IMR-90 (cell line): ENCODE measurements at regions of chr1 and their contacts with region 1.

Region 1: DNA sequence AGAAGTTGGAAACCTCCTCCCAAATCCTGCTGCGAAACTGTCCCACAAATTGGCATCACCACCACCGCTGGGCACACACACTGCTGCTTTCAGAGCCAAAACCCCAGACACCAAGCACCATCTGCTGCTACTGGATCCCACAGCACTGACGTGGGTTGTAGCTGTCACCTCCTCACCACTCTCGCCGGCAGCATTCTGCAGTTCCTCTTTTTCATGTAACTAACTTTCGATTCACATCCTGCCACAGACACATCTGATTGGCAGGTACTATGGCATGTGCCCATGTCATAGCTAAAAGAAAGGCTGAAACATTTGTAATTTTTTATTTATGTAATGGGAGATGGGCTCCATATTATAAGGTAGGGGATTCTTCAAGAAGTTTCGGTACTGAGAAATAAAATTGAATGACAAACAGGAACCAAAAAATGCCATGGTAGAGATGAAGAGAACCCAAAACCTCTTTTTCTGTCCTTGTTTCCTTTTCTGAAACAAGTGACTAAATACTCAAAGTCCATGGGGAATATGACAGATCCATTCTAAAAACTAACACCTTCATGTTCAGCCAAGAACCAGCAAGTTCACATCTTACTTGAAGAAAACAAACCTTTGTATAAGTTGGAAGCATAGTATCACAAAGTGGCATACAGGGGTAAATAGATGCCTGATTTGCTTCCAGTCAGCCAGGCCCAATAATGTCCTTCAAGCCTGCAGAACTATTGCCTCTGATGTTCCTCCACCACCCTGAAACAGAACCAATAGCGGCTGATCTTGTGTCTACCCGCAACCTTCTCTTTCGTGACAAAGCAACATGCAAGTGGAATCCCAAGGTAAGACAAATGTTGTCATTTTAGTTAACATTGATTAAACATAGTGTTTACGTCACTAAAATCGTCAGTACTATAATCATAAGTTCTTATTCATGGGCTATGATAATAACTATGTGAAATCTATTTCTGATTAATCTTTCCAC is 26.6 kb upstream of the RGS13 start:
- DNase-seq: no peak
- ATAC-seq: no peak
- H3K4me3 ChIP-seq: no peak overlapping the region
- H3K27ac ChIP-seq: no peak overlapping the region
- H3K4me1 ChIP-seq: no peaks in the 10 kb centered on the region; the same call in 1 of the 2 replicates
- H3K27me3 ChIP-seq: no peaks in the 10 kb centered on the region
- CTCF ChIP-seq: no peak
- POLR2A ChIP-seq: no peak
- RAD21 ChIP-seq: no peak

Region 2: DNA sequence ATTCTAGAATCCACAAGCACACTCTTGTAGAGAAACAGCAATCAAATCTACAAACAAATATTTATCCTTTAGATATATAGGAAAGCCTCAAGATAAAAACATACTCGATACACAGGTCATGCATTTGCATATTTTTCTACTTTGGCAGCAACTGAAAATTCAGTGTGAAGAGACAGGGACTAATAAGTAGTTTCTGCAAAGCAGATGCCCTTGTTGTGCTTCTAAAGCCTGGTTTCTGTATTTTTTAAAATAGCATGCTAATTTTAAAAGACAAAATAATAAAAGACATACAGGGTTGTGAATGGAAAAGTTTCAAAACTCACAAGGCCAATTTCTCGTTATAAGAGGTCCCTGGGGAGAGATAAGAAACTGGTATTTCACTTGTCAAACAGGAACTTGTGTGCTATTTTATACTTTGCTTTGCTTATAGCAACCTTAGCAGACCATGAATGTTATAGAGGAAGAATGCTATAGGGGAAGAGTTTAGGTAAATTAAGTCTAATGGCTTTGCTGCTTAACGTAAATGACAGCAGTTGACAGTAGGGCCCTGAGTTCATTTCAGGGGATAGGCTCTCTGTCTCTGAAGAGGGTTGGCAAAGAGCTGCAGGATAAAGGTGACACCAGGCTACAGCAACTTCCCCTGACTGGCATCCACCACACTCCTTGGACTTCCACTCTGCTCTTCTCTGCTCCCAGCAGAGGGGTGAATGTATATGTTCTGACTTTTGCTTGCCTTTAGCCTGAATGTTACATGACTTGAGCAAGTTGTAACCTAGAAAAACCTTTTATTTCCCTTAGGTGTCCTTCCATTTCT is 17.2 kb after region 1 on chr1:
- CTCF ChIA-PET with region 1: no interaction called
- POLR2A ChIA-PET with region 1: no interaction called
- dilution Hi-C with region 1: no loop called
- in situ Hi-C with region 1: no loop called
- intact Hi-C with region 1: no loop called
- DNase-seq: no peak
- ATAC-seq: no peak
- H3K4me3 ChIP-seq: no peak overlapping the region
- H3K27ac ChIP-seq: no peak overlapping the region
- H3K4me1 ChIP-seq: no peaks in the 10 kb centered on the region; the same call in 1 of the 2 replicates
- H3K27me3 ChIP-seq: no peaks in the 10 kb centered on the region
- CTCF ChIP-seq: no peak
- POLR2A ChIP-seq: no peak
- RAD21 ChIP-seq: no peak

Region 3: DNA sequence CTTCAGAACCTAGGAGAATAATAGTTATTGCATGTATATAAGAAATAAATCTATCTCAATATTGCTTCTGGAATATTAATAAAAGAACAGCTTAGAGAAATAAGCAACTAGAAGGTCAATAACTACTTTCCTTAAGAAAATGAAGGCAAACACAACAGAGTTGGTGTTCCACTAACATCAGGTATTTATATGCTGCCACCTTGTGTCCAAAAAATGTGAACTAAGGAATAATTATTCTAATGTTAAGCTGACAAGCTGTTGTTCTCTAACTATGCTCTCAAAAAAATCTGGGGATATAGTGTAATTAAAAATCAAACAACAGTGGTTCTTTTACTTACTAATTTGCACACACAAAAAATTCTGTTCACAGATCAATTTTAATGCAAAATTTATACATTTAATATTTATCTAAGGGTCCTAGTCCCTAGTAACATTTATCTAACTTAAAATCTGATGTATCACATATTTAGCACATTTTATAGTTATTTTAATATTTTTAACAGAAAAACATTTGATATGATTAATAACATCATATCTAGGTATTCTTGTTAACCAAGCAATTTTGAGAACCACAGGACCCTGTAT is 410.1 kb after region 1 on chr1:
- CTCF ChIA-PET with region 1: no interaction called
- POLR2A ChIA-PET with region 1: no interaction called
- dilution Hi-C with region 1: no loop called
- in situ Hi-C with region 1: no loop called
- intact Hi-C with region 1: loop called (anchors 1 kb)
- DNase-seq: peak; percentile 64
- ATAC-seq: peak; percentile 66
- H3K4me3 ChIP-seq: no peak overlapping the region
- H3K27ac ChIP-seq: no peak overlapping the region
- H3K4me1 ChIP-seq: no peaks in the 10 kb centered on the region
- H3K27me3 ChIP-seq: no peaks in the 10 kb centered on the region
- CTCF ChIP-seq: peak; percentile 59
- POLR2A ChIP-seq: no peak
- RAD21 ChIP-seq: peak; percentile 74

Region 4: DNA sequence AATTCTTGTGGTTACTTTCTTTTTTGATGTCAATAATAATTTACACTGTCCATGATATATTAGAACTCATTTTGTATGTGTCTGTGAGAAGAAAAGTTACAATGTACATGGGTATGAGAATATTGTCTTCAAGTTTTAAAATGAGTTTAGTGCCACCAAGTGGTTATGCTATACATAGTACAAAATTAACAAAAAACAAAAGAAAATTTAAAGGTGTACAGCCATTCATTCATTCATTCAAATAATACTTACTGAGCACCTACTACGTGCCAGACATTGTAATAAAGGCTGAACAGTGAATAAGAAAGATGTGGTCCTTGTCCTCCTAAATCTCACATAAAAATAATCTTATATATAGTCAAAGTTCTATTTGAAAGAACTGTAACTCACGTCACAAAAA is 422.0 kb after region 1 on chr1:
- CTCF ChIA-PET with region 1: no interaction called
- POLR2A ChIA-PET with region 1: no interaction called
- dilution Hi-C with region 1: no loop called
- in situ Hi-C with region 1: no loop called
- intact Hi-C with region 1: loop called (anchors 2 kb)
- DNase-seq: peak; percentile 31
- ATAC-seq: peak; percentile 69
- H3K4me3 ChIP-seq: no peak overlapping the region
- H3K27ac ChIP-seq: no peak overlapping the region
- H3K4me1 ChIP-seq: no peaks in the 10 kb centered on the region
- H3K27me3 ChIP-seq: no peaks in the 10 kb centered on the region
- CTCF ChIP-seq: peak; percentile 46
- POLR2A ChIP-seq: no peak
- RAD21 ChIP-seq: peak; percentile 33